ENCODE measurements at regions of chr3 and their contacts with region 1.

Region 1: GRCh38 chr3:178443634-178444033 is 92.6 kb upstream of the KCNMB2 start:
- DNase-seq: no peak
- ATAC-seq: no peak; the same call in 1 of the 3 replicates
- H3K4me3 ChIP-seq: no peak overlapping the region
- H3K27ac ChIP-seq: no peak overlapping the region
- H3K4me1 ChIP-seq: no peaks in the 10 kb centered on the region
- H3K27me3 ChIP-seq: no peaks in the 10 kb centered on the region
- CTCF ChIP-seq: peak in 2 of 3 experiments; percentile 10 to 23; a peak in 2 of 6 replicates
- EP300 ChIP-seq: no peak
- POLR2A ChIP-seq: no peak
- RAD21 ChIP-seq: peak; percentile 62

Region 2: GRCh38 chr3:178606129-178606528 is 162.5 kb after region 1 on chr3:
- CTCF ChIA-PET with region 1: interaction called, 3 read pairs
- POLR2A ChIA-PET with region 1: no interaction called
- RAD21 ChIA-PET with region 1: no interaction called
- SMC1A ChIA-PET with region 1: interaction called, 4 read pairs
- in situ Hi-C with region 1: no loop called
- intact Hi-C with region 1: loop called (anchors 5 kb)
- DNase-seq: no peak
- ATAC-seq: no peak
- H3K4me3 ChIP-seq: no peak overlapping the region
- H3K27ac ChIP-seq: no peak overlapping the region
- H3K4me1 ChIP-seq: peaks cover 7% of the 10 kb centered on the region
- H3K27me3 ChIP-seq: no peaks in the 10 kb centered on the region
- CTCF ChIP-seq: no peak
- EP300 ChIP-seq: no peak
- POLR2A ChIP-seq: no peak
- RAD21 ChIP-seq: no peak

Region 3: GRCh38 chr3:178960181-178960580 is 516.5 kb after region 1 on chr3:
- CTCF ChIA-PET with region 1: interaction called, 3 read pairs
- POLR2A ChIA-PET with region 1: no interaction called
- RAD21 ChIA-PET with region 1: no interaction called
- SMC1A ChIA-PET with region 1: interaction called, 5 read pairs
- in situ Hi-C with region 1: loop called (anchors 5 kb)
- intact Hi-C with region 1: no loop called
- DNase-seq: no peak
- ATAC-seq: no peak
- H3K4me3 ChIP-seq: no peak overlapping the region
- H3K27ac ChIP-seq: no peak overlapping the region
- H3K4me1 ChIP-seq: no peaks in the 10 kb centered on the region
- H3K27me3 ChIP-seq: no peaks in the 10 kb centered on the region
- CTCF ChIP-seq: no peak
- EP300 ChIP-seq: no peak
- POLR2A ChIP-seq: no peak
- RAD21 ChIP-seq: no peak

Region 4: GRCh38 chr3:178966299-178967176 is 522.9 kb after region 1 on chr3:
- CTCF ChIA-PET with region 1: interaction called, 138 read pairs
- POLR2A ChIA-PET with region 1: no interaction called
- RAD21 ChIA-PET with region 1: interaction called, 20 read pairs
- SMC1A ChIA-PET with region 1: interaction called, 58 read pairs
- in situ Hi-C with region 1: loop called (anchors 5 kb)
- intact Hi-C with region 1: no loop called
- DNase-seq: peak; percentile 32
- ATAC-seq: peak; percentile 26
- H3K4me3 ChIP-seq: peak overlapping the region; percentile 39; the same call in 1 of the 2 replicates
- H3K27ac ChIP-seq: peak overlapping the region; percentile 73
- H3K4me1 ChIP-seq: peaks cover 32% of the 10 kb centered on the region
- H3K27me3 ChIP-seq: no peaks in the 10 kb centered on the region
- CTCF ChIP-seq: peak; percentile 41 to 61 (median 45); a peak in 5 of 6 replicates
- EP300 ChIP-seq: no peak; a peak in 1 of 4 replicates
- POLR2A ChIP-seq: no peak
- RAD21 ChIP-seq: peak; percentile 91